Activated CD8-positive, alpha-beta T cell treated with anti-CD3 and anti-CD28 coated beads for 36 hours (primary cell): ENCODE measurements at regions of chr4 and their contacts with region 1.

Region 1: GRCh38 chr4:113761620-113762185 is at the start of gene CAMK2D:
- DNase-seq: peak; percentile 88
- ATAC-seq: peak; percentile 54
- H3K4me3 Mint-ChIP-seq: peak within 1 kb of the TSS; percentile 98
- H3K27ac Mint-ChIP-seq: peak within 1 kb of the TSS; percentile 98
- H3K4me1 Mint-ChIP-seq: peaks cover 44% of the 10 kb centered on the region
- H3K27me3 Mint-ChIP-seq: no peaks in the 10 kb centered on the region
- CTCF ChIP-seq: no peak
- total RNA-seq, gene CAMK2D: 62.8 to 66.1 TPM

Region 2: DNA sequence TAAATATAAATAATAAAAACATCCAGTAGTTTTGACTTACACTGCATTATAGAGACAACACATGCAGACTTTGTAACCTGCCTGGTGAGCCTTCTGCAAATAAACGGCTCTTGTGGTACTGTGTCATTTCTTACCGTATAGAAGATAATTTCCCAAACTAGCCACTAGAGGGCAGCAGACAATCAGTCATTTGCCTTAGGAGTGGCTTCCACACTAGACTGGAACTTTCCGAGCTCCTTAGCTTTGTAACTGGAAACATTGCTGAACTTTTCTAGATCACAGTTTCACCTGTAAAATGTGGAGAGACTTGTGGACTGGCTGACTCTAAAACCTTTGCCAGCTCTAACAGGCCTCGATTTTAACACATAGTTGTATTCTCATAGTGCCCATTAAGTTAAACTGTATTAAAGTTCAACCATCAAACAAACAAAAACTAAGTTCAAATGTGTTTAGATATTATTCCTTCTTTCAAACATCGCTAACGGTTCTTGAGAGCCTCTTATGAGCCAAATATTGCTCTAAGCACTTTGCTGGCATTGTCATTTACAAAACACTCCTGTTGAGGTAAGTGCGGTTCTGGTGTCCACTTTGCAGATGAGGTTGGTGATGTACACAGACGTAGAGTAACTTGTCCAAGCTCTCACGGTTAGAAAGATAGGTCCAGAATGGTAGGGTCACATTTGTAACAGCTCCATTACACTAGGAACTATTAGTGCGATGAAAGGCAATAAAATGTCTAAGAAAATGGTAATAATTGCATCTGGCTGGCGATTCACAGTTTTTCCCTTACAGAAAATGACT is 366.8 kb before region 1 on chr4:
- CTCF ChIA-PET with region 1: interaction called, 4 read pairs
- POLR2A ChIA-PET with region 1: no interaction called
- intact Hi-C with region 1: loop called (anchors 5 kb)
- DNase-seq: peak; percentile 56
- ATAC-seq: peak; percentile 95
- H3K4me3 Mint-ChIP-seq: no peak overlapping the region
- H3K27ac Mint-ChIP-seq: no peak overlapping the region
- H3K4me1 Mint-ChIP-seq: peaks cover 4% of the 10 kb centered on the region
- H3K27me3 Mint-ChIP-seq: peaks cover 3% of the 10 kb centered on the region
- CTCF ChIP-seq: peak; percentile 81

Region 3: GRCh38 chr4:113474017-113474416 is 287.7 kb before region 1 on chr4:
- CTCF ChIA-PET with region 1: no interaction called
- POLR2A ChIA-PET with region 1: no interaction called
- intact Hi-C with region 1: loop called (anchors 10 kb)
- DNase-seq: peak; percentile 50
- ATAC-seq: peak; percentile 88
- H3K4me3 Mint-ChIP-seq: no peak overlapping the region
- H3K27ac Mint-ChIP-seq: peak overlapping the region; percentile 83
- H3K4me1 Mint-ChIP-seq: peaks cover 55% of the 10 kb centered on the region
- H3K27me3 Mint-ChIP-seq: no peaks in the 10 kb centered on the region
- CTCF ChIP-seq: no peak

Region 4: GRCh38 chr4:113636438-113636818 is 125.3 kb before region 1 on chr4:
- CTCF ChIA-PET with region 1: interaction called, 4 read pairs
- POLR2A ChIA-PET with region 1: interaction called, 6 read pairs
- intact Hi-C with region 1: loop called (anchors 5 kb)
- DNase-seq: peak; percentile 24
- ATAC-seq: peak; percentile 79
- H3K4me3 Mint-ChIP-seq: peak overlapping the region; percentile 45
- H3K27ac Mint-ChIP-seq: peak overlapping the region; percentile 88
- H3K4me1 Mint-ChIP-seq: peaks cover 54% of the 10 kb centered on the region
- H3K27me3 Mint-ChIP-seq: no peaks in the 10 kb centered on the region
- CTCF ChIP-seq: no peak

Region 5: GRCh38 chr4:113684534-113685091 is 77.1 kb before region 1 on chr4:
- CTCF ChIA-PET with region 1: no interaction called
- POLR2A ChIA-PET with region 1: interaction called, 12 read pairs
- intact Hi-C with region 1: loop called (anchors 1 kb)
- DNase-seq: peak; percentile 57
- ATAC-seq: peak; percentile 71
- H3K4me3 Mint-ChIP-seq: no peak overlapping the region
- H3K27ac Mint-ChIP-seq: peak overlapping the region; percentile 94
- H3K4me1 Mint-ChIP-seq: peaks cover 66% of the 10 kb centered on the region
- H3K27me3 Mint-ChIP-seq: no peaks in the 10 kb centered on the region
- CTCF ChIP-seq: no peak

Region 6: GRCh38 chr4:113869743-113870375 is 108.2 kb after region 1 on chr4:
- CTCF ChIA-PET with region 1: no interaction called
- POLR2A ChIA-PET with region 1: no interaction called
- intact Hi-C with region 1: no loop called
- DNase-seq: peak; percentile 85
- ATAC-seq: peak; percentile 94
- H3K4me3 Mint-ChIP-seq: no peak overlapping the region
- H3K27ac Mint-ChIP-seq: peak overlapping the region; percentile 84
- H3K4me1 Mint-ChIP-seq: peaks cover 29% of the 10 kb centered on the region
- H3K27me3 Mint-ChIP-seq: no peaks in the 10 kb centered on the region
- CTCF ChIP-seq: no peak

Region 7: GRCh38 chr4:113901994-113902787 is 140.5 kb after region 1 on chr4:
- CTCF ChIA-PET with region 1: no interaction called
- POLR2A ChIA-PET with region 1: no interaction called
- intact Hi-C with region 1: loop called (anchors 10 kb)
- DNase-seq: peak; percentile 78
- ATAC-seq: peak; percentile 91
- H3K4me3 Mint-ChIP-seq: peak overlapping the region; percentile 63
- H3K27ac Mint-ChIP-seq: peak overlapping the region; percentile 92
- H3K4me1 Mint-ChIP-seq: peaks cover 65% of the 10 kb centered on the region
- H3K27me3 Mint-ChIP-seq: no peaks in the 10 kb centered on the region
- CTCF ChIP-seq: peak; percentile 64